ENCODE measurements at regions of chr10 and their contacts with region 1.

Region 1: GRCh38 chr10:71812016-71812912 is 38.8 kb downstream of the PSAP start:
- DNase-seq: peak; percentile 83
- H3K4me3 Mint-ChIP-seq: no peak overlapping the region
- H3K27ac Mint-ChIP-seq: no peak overlapping the region
- H3K4me1 Mint-ChIP-seq: peaks cover 2% of the 10 kb centered on the region
- H3K27me3 Mint-ChIP-seq: no peaks in the 10 kb centered on the region

Region 2: DNA sequence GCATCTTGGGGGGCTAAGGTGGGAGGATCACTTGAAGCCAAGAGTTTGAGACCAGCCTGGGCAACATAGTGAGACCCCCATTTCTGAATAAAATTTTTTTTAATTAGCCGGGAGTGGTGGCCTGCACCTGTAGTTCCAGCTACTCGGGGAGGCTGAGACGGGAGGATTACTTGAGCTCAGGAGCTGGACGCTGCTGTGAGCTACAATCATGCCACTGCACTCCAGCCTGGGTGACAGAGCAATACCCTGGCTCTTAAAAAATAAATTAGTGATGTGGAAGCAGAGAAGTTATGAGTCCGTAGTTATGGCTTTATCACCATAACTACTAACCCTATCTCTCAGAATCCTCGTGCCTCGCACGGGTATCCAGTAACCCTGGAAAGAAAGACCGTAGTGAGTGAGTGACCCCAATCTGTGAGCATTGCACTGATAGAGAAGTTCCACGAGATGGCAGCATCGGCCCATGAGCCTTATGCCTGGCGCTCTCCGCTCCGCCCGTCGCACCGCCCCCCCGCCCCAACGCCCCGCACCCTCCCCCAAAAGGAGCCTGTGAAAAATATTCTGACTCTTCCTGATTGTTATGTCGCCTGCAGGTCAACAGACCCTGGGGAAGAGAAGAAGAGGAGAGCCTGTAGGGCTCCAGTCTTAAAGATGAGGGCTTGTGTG is 498.1 kb before region 1 on chr10:
- CTCF ChIA-PET with region 1: interaction called, 4 read pairs
- intact Hi-C with region 1: loop called (anchors 2 kb)
- DNase-seq: peak; percentile 62
- H3K4me3 Mint-ChIP-seq: no peak overlapping the region
- H3K27ac Mint-ChIP-seq: no peak overlapping the region
- H3K4me1 Mint-ChIP-seq: peaks cover 18% of the 10 kb centered on the region
- H3K27me3 Mint-ChIP-seq: peaks cover 5% of the 10 kb centered on the region

Region 3: DNA sequence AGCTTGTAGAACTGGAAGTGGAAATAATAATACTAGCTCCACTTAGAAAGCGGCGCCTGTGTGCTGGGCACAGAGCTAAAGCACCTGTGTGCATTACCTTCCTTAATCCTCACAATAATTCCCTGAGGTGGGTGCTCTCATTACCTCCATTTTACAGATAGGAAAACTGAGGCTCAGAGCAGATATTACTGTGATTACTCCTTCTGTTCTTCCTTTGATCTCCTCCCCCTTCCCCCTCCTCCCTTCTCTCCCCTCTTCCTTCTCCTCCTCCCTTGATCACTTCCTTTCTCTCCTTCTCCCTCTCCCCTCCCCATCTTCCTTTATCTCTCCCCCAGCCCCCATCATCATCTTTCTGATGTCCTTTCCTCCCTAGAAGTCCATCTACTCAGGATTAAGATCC is 147.7 kb before region 1 on chr10:
- CTCF ChIA-PET with region 1: interaction called, 3 read pairs
- intact Hi-C with region 1: loop called (anchors 1 kb)
- DNase-seq: no peak
- H3K4me3 Mint-ChIP-seq: no peak overlapping the region
- H3K27ac Mint-ChIP-seq: no peak overlapping the region
- H3K4me1 Mint-ChIP-seq: peaks cover 14% of the 10 kb centered on the region
- H3K27me3 Mint-ChIP-seq: no peaks in the 10 kb centered on the region